ENCODE measurements at regions of chr11 and their contacts with region 1.

Region 1: DNA sequence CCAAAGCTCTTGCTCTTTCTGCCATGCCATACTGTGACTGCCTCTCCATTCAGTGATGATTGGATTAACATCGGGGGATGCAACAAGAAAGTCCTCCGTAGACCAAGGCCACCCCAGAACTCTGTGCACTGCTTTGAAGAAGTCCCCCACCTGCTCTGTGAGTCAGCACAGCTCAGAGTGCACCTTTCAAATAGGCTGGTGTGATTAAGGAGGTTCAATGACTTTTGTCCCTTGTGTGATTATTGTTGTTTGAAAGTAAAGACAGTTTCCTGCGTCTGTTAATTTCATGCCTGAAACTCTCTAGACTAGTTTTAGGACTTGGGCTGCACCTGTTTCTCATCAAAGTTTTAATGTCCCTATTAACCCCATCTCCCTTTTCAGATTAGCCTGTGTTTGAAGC is 33.0 kb upstream of the DBX1 start:
- DNase-seq: no peak
- H3K4me3 ChIP-seq: no peak overlapping the region
- H3K27ac ChIP-seq: no peak overlapping the region
- H3K4me1 ChIP-seq: no peaks in the 10 kb centered on the region
- CTCF ChIP-seq: no peak

Region 2: GRCh38 chr11:19988598-19988997 is 204.7 kb before region 1 on chr11:
- CTCF ChIA-PET with region 1: no interaction called
- POLR2A ChIA-PET with region 1: interaction called, 11 read pairs
- intact Hi-C with region 1: no loop called
- DNase-seq: no peak
- H3K4me3 ChIP-seq: no peak overlapping the region
- H3K27ac ChIP-seq: no peak overlapping the region
- H3K4me1 ChIP-seq: no peaks in the 10 kb centered on the region
- CTCF ChIP-seq: no peak